ENCODE measurements at regions of chr4 and their contacts with region 1.

Region 1: DNA sequence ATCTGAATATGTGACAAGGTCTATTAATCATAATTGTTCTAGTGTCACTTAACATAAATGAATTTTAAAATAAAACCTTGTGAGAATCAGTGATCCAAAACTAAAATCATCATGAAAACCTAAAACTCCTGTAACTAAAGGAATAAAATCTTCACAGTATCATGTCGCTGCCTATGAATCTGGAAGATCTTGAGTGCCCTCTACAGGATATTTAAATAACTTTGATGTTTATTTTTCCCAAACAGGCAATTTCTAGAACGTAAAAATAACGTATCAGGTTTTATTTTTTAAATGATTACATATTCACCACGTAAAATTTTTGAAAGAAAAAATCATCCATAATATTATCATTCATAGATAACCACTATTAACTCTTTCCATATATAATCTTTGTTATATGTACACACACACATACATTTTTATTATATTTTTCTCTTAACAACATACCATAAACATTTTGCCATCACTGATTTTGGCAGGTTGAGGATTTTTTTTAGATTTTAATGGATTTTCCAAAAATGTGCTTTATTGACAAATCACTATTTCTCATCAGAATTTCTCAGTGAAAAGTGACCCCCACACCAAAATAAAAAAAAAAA is 79.6 kb downstream of the COMMD8 start:
- DNase-seq: peak; percentile 14 to 33 (median 20)
- ATAC-seq: 0 out of 3 replicates have a peak, but pooled peaks have one; percentile 44
- H3K4me3 ChIP-seq: no peak overlapping the region
- H3K27ac ChIP-seq: no peak overlapping the region
- H3K4me1 ChIP-seq: no peaks in the 10 kb centered on the region
- H3K27me3 ChIP-seq: no peaks in the 10 kb centered on the region
- CTCF ChIP-seq: peak in 2 of 3 experiments; percentile 26 to 68; a peak in 4 of 6 replicates
- EP300 ChIP-seq: no peak
- POLR2A ChIP-seq: no peak
- RAD21 ChIP-seq: peak; percentile 63 to 74

Region 2: GRCh38 chr4:45629717-45630116 is 1754.2 kb before region 1 on chr4:
- CTCF ChIA-PET with region 1: no interaction called
- POLR2A ChIA-PET with region 1: no interaction called
- in situ Hi-C with region 1: no loop called
- intact Hi-C with region 1: no loop called
- DNase-seq: no peak
- ATAC-seq: no peak
- H3K4me3 ChIP-seq: no peak overlapping the region
- H3K27ac ChIP-seq: no peak overlapping the region
- H3K4me1 ChIP-seq: no peaks in the 10 kb centered on the region
- H3K27me3 ChIP-seq: no peaks in the 10 kb centered on the region
- CTCF ChIP-seq: no peak
- EP300 ChIP-seq: no peak
- POLR2A ChIP-seq: no peak
- RAD21 ChIP-seq: no peak

Region 3: DNA sequence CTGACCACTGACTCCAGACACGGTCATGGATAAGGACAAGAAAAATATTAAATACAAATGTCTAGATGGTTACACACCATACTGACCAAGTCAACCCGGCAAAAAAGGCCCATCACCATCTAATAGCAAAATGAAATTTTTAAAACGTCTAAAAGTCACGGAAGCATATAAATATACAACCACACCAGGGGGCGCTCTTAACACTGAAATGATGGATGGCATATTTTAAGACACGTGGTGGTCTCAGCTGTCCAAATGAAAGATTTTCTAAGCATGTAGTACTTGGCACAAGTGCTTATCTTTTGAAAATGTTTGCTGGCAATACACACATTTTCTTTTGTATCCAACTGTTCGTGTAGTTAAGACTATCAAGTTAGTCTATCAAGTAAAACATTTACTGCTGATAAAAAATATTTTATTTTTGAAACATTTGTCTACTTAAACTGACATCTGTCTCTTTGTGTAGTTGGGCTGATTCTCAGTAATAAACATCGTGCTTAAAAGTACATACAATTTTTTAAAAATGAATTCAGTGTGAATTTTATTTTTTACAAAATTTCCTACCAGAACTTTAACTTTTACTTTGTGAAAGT is 539.5 kb before region 1 on chr4:
- CTCF ChIA-PET with region 1: interaction called, 12 read pairs
- POLR2A ChIA-PET with region 1: no interaction called
- in situ Hi-C with region 1: loop called (anchors 25 kb)
- intact Hi-C with region 1: loop called (anchors 2 kb)
- DNase-seq: peak; percentile 21 to 68 (median 24)
- ATAC-seq: 0 out of 3 replicates have a peak, but pooled peaks have one; percentile 43
- H3K4me3 ChIP-seq: no peak overlapping the region
- H3K27ac ChIP-seq: no peak overlapping the region
- H3K4me1 ChIP-seq: no peaks in the 10 kb centered on the region
- H3K27me3 ChIP-seq: no peaks in the 10 kb centered on the region
- CTCF ChIP-seq: peak; percentile 37 to 61 (median 57); a peak in 5 of 6 replicates
- EP300 ChIP-seq: no peak
- POLR2A ChIP-seq: no peak
- RAD21 ChIP-seq: peak; percentile 51 to 72

Region 4: GRCh38 chr4:47562297-47562696 is 178.4 kb after region 1 on chr4:
- CTCF ChIA-PET with region 1: no interaction called
- POLR2A ChIA-PET with region 1: no interaction called
- in situ Hi-C with region 1: no loop called
- intact Hi-C with region 1: loop called (anchors 10 kb)
- DNase-seq: no peak
- ATAC-seq: no peak
- H3K4me3 ChIP-seq: no peak overlapping the region
- H3K27ac ChIP-seq: no peak overlapping the region
- H3K4me1 ChIP-seq: peaks cover 7 to 15% of the 10 kb centered on the region in 2 experiments; a peak in 4 of 5 replicates
- H3K27me3 ChIP-seq: peaks cover 3 to 6% of the 10 kb centered on the region in 2 experiments; a peak in 4 of 5 replicates
- CTCF ChIP-seq: no peak
- EP300 ChIP-seq: no peak
- POLR2A ChIP-seq: no peak
- RAD21 ChIP-seq: no peak